Adrenal gland (tissue), 19 donors: ENCODE measurements at regions of chr17 and their contacts with region 1.

Region 1: GRCh38 chr17:13594762-13595598 is 6.7 kb downstream of the HS3ST3A1 start:
- DNase-seq: peak; percentile 69 to 89 (median 83)
- H3K4me3 ChIP-seq: no peak overlapping the region
- H3K27ac ChIP-seq: no peak overlapping the region
- H3K4me1 ChIP-seq: peaks cover 0 to 4% of the 10 kb centered on the region in 2 donors
- H3K27me3 ChIP-seq: peaks cover 16% of the 10 kb centered on the region
- CTCF ChIP-seq: peak; percentile 73 to 89 (median 80)
- POLR2A ChIP-seq: no peak

Region 2: DNA sequence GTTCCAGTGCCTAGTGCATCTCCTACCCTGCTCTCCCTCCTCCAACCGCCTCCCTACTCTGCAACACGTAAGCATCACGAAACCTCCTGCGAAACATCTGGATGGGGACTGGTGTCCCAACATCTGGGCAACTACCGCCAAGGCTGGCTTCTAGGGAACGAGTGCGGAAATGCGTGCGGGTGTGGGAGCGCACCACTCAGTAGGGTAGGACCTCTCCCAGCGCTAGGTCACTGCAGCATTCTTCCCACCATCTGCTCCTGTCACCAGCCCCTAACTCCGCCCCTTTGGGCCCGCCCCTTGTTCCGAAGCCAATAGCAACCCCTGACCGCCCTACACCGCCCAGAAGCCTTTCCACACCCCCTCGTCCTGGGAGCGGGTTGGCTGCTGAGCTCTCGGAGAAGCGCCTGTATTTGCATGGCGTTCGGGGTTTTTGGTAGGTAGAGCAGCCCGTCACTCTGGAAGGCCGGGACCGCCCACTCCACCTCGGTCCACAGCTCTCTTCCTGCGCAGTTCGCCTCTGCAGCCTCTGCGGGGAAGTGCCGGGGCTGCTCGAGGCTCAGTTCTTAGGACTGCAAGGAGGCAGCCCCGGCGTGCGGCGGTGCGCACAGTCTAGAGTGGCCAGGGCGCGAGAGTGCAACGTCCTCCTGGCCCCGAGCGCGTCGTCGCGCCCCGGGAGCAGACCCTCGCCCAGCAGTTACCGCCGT is 705.7 kb after region 1 on chr17 and contains the start of gene HS3ST3B1:
- intact Hi-C with region 1: loop called (anchors 2 to 5 kb)
- DNase-seq: peak; percentile 95 to 99 (median 98)
- H3K4me3 ChIP-seq: peak within 1 kb of the TSS; percentile 37 to 64 (median 58)
- H3K27ac ChIP-seq: peak within 1 kb of the TSS in 4 of 5 donors; percentile 53 to 79 (median 61)
- H3K4me1 ChIP-seq: peaks cover 22 to 30% of the 10 kb centered on the region in 2 donors
- H3K27me3 ChIP-seq: peaks cover 39% of the 10 kb centered on the region
- CTCF ChIP-seq: peak in 3 of 6 experiments; percentile 32 to 44 (median 32)
- POLR2A ChIP-seq: peak; percentile 41 to 91
- total RNA-seq, gene HS3ST3B1: 2.4 to 8.5 (median 3.9) TPM